Posterior cingulate gyrus (tissue), 11 donors: ENCODE measurements at regions of chr5 and their contacts with region 1.

Region 1: DNA sequence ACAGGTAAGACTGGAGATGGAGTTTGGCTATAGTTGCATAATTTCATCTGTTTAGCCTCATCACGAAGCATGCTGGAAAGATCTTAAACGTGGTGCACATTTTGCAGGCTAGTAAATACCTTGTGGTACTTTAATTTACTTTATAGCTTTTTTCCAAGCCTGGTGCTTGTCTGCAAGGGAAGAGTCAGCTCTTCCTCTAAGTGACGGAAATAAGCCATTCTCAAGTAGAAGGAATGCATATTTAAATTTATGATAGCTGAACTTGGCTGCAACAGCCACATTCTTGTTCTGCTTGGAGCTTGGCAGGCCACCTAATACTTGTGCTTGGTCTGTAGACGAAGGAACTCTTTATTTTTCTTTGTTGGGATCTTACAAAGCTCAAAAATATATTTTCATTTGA is 188.0 kb upstream of the PIK3R1 start:
- DNase-seq: no peak

Region 2: DNA sequence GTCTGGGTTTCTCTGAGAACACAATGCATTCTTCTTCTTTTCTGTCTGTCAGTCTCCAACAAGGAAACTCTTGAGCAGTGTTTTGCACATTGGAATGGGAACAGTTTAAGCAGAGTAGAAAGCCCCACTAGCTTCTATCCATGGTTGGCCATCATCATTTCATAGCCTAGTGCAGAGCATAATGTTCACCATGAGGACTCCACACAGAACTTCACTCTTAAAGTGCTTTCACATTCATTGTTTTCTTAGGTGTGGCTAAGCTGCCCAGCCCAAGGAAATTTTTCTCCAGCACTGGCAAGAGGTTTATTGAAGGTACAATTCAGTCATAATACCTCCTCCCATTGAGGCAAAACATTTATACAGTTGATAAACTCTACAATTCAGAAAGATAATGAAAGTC is 328.0 kb before region 1 on chr5:
- intact Hi-C with region 1: no loop called
- DNase-seq: no peak

Region 3: GRCh38 chr5:67941614-67942401 is 85.7 kb before region 1 on chr5:
- intact Hi-C with region 1: no loop called
- DNase-seq: no peak

Region 4: GRCh38 chr5:68080282-68081050 is 52.9 kb after region 1 on chr5:
- intact Hi-C with region 1: loop called (anchors 5 kb)
- DNase-seq: no peak

Region 5: DNA sequence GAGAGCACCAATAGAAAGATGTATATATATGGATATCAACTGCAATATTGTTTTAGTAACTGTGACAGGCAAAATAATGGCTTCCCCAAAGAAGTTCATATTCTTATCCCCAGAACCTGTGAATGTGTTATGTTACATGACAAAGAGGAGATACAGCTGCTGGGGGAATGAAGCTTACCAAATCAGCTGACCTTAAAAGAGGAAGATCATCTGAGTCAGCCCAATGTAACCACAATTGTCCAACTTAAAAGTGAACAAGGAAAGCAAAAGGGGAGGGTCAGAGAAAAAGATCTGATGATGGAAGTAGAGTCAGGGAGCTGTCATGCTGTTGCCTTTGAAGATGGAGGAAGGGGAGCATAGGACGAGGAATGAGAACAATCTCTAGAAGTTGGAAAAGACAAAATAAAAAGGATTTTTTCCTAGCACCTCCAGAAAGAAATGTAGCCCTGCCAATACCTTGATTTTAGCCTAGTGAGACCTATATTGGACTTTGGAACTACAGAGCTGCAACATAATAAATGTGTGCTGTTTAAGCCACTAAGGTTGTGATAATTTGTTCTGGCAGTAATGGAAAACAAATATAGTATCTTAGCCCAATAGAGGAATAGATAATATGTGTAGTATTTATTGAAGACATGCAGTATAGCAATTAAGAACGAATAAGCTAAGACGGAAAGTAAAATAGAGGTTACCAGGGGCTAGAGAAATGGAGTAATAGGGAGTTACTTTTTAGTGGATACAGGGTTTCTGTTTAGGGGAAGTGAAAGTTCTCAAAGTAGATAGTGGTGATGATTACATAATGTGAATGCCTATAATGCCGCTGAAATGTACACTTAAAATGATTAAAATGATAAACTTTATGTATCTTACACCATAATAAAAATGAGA is 303.9 kb after region 1 on chr5:
- intact Hi-C with region 1: no loop called
- DNase-seq: no peak